PC-9 (cell line): ENCODE measurements at regions of chr7 and their contacts with region 1.

Region 1: GRCh38 chr7:136150311-136150710 is 173.2 kb upstream of the MTPN start:
- DNase-seq: no peak
- H3K4me3 ChIP-seq: no peak overlapping the region
- H3K27ac ChIP-seq: no peak overlapping the region
- H3K4me1 ChIP-seq: no peaks in the 10 kb centered on the region
- H3K27me3 ChIP-seq: no peaks in the 10 kb centered on the region
- CTCF ChIP-seq: no peak

Region 2: GRCh38 chr7:136055266-136055665 is 95.0 kb before region 1 on chr7:
- CTCF ChIA-PET with region 1: interaction called, 23 read pairs
- POLR2A ChIA-PET with region 1: no interaction called
- intact Hi-C with region 1: no loop called
- DNase-seq: no peak
- H3K4me3 ChIP-seq: no peak overlapping the region
- H3K27ac ChIP-seq: no peak overlapping the region
- H3K4me1 ChIP-seq: no peaks in the 10 kb centered on the region
- H3K27me3 ChIP-seq: no peaks in the 10 kb centered on the region
- CTCF ChIP-seq: no peak